Dendritic cell treated with granulocyte-macrophage colony-stimulating factor and Interleukin-4, amounts not matched to agents 40 ng/mL and 50 ng/mL, for 4 days (primary cell): ENCODE measurements at regions of chr20 and their contacts with region 1.

Region 1: DNA sequence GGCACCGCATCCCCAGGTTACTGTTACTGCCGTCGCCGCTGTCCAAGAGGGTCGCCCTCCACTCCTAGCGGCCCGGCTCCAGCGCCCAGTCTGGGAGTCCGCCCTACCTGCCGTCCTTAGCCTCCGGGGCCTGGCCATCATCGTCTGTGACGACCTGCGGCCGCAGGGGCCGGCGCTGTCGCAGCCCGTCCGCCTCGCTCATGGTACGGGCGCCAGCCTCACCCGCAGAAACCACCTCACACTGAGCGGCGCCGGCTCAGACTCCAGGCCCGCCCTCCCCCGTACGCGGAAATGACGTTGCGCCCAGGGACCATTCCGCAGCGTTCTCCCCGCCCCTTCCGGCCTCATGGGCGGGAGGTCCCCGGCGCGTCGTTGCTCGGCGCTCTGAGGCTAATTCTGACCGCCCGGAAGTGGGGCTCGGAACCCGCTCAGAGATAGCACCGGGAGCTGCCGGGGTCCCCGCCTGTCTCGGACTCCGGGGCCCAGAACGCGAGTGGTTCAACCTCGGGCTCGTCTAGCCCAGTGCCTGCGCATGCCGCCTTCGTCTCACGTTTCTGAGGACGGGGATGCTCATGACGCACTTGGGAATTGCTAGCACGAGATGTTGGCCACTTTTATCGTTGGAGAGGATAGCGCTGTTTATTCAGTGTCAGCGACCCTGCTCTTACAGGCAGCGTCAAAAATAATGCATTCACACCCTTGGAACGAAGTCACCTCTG is at the start of gene APMAP:
- H3K4me3 Mint-ChIP-seq: peak within 1 kb of the TSS; percentile 98
- H3K27ac Mint-ChIP-seq: peak within 1 kb of the TSS; percentile 95
- H3K4me1 Mint-ChIP-seq: peaks cover 63% of the 10 kb centered on the region
- H3K27me3 Mint-ChIP-seq: peaks cover 3% of the 10 kb centered on the region

Region 2: GRCh38 chr20:24948939-24949679 is 43.5 kb before region 1 on chr20 and contains the start of gene CST7:
- intact Hi-C with region 1: loop called (anchors 5 kb)
- H3K4me3 Mint-ChIP-seq: peak within 1 kb of the TSS; percentile 63
- H3K27ac Mint-ChIP-seq: peak within 1 kb of the TSS; percentile 92
- H3K4me1 Mint-ChIP-seq: peaks cover 65% of the 10 kb centered on the region
- H3K27me3 Mint-ChIP-seq: peaks cover 5% of the 10 kb centered on the region

Region 3: GRCh38 chr20:25136643-25137559 is 144.3 kb after region 1 on chr20:
- intact Hi-C with region 1: no loop called
- H3K4me3 Mint-ChIP-seq: no peak overlapping the region
- H3K27ac Mint-ChIP-seq: no peak overlapping the region
- H3K4me1 Mint-ChIP-seq: no peaks in the 10 kb centered on the region
- H3K27me3 Mint-ChIP-seq: peaks cover 10% of the 10 kb centered on the region

Region 4: DNA sequence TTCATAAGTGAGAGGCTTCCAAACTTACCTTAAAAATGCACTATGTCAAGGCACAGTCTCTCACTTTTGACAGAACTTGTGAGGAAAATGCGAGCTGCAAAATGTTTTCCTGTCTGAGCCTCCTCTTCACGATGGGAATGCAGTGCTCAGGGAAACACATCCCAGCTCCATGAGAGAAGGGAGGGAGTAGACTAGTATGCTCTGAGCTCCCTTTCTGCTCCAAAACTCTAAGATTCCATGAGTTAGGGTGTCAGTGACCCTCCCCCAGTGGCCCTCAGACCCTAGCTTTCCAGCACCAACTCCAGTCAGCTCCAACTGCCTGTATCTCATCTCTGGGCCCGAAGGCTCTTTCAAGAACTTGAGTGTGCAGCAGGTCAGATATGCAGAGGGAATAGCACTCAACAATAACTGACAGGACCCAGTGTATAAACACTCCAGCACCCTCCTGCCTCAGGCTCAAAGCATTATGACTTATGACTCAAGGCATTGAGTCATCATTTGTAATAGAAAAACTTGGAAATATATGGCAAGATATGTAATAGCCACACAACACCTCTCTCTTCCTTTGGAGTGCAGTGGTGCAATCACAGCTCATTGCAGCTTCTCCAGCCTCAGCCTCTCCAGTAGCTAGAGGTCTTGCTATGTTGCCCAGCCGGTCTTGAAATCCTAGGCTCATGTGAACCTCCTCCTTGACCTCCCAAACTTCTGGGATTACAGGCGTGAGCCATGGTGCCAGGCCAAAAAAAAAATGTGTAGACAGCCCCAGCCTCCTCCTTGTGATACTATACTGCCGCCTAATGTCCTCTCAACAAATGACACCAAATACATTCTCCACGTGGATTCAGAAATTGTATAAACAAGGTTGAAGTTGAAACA is 186.2 kb after region 1 on chr20:
- intact Hi-C with region 1: loop called (anchors 2 kb)
- H3K4me3 Mint-ChIP-seq: no peak overlapping the region
- H3K27ac Mint-ChIP-seq: no peak overlapping the region
- H3K4me1 Mint-ChIP-seq: no peaks in the 10 kb centered on the region
- H3K27me3 Mint-ChIP-seq: peaks cover 7% of the 10 kb centered on the region

Region 5: GRCh38 chr20:25247956-25248785 is 255.5 kb after region 1 on chr20 and contains the start of gene PYGB:
- intact Hi-C with region 1: loop called (anchors 2 kb)
- H3K4me3 Mint-ChIP-seq: peak within 1 kb of the TSS; percentile 91
- H3K27ac Mint-ChIP-seq: peak within 1 kb of the TSS; percentile 82
- H3K4me1 Mint-ChIP-seq: peaks cover 59% of the 10 kb centered on the region
- H3K27me3 Mint-ChIP-seq: peaks cover 6% of the 10 kb centered on the region

Region 6: DNA sequence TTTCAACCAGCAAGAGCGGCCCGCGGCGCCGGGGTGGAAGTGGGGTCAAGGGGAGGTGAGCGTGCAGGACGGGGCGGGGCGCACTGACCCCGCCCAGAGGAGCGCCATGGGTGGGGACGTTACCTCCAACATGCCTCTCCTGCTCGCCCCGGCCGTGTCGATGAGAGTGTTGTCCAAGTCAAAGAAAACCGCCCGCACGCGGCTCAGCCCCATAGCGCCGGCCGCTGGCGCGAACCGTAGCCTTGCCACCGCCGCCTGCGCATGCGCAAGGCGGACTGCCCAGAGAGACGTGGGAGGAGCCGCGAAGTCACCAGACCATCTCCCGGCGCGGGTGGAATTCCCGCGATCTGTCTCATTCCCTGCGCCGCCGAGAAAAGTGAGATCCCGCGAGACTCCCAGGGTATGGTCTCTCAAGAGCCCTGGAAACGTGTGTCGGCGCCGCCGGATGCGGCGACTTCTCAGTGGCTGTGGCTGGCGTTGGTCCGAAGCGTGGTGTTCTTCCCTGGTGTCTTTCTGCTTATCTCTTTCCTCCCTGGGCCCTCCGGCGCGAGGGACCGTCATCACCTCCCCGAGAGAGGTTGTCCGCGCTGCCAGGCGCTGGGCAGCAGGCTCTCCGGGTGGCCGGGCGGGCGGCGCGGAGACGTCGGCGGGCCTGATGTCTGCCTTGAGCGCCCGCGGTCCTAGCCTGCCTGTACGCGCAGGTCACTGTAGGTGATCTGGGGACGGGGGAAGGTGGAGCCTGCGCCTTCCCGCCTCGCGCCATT is 631.3 kb after region 1 on chr20 and contains the start of gene NANP:
- intact Hi-C with region 1: loop called (anchors 5 kb)
- H3K4me3 Mint-ChIP-seq: peak within 1 kb of the TSS; percentile 83
- H3K27ac Mint-ChIP-seq: peak within 1 kb of the TSS; percentile 92
- H3K4me1 Mint-ChIP-seq: peaks cover 39% of the 10 kb centered on the region
- H3K27me3 Mint-ChIP-seq: no peaks in the 10 kb centered on the region